Heart right ventricle (tissue), 16 donors: ENCODE measurements at regions of chr3 and their contacts with region 1.

Region 1: GRCh38 chr3:107740992-107741896 is 218.5 kb downstream of the BBX start:
- DNase-seq: no peak
- ATAC-seq: no peak
- H3K4me3 ChIP-seq: no peak overlapping the region
- H3K27ac ChIP-seq: no peak overlapping the region
- H3K4me1 ChIP-seq: peaks cover 0 to 4% (median 0%) of the 10 kb centered on the region in 9 donors
- H3K27me3 ChIP-seq: no peaks in the 10 kb centered on the region
- CTCF ChIP-seq: peak; percentile 39 to 78 (median 62)

Region 2: DNA sequence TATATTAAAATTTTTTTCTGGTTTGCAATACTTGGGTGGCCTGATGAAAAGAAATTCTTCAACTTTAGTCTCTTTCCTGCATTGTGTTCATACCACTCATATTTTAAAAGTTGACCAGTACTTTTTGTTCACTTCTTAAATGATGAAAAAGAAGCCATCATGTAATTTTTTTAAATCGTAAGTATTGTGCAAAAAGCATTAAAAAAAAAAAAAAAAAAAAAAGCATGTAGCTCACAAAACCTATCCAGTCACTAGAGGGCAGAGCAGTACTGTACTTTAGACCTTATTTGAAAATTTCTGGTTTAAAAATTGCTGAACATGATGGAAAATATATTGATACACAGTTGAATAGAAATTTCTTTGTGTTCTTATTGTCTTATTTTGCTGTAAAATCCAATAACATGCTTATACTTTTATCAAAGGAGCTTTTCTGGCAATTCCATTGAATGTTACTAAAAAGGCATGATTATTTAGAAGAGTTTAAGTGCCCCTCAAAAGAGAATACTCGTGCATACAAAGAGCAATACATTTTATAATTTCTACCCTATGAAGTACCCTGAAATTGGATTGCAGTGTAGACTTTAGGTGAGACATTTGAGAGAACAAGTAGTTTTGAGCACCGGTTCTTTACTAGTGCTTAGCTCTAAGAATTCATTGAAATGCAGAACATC is 80.8 kb before region 1 on chr3:
- intact Hi-C with region 1: loop called in 1 of 10 experiments (anchors 5 kb)
- DNase-seq: no peak
- ATAC-seq: no peak
- H3K4me3 ChIP-seq: no peak overlapping the region
- H3K27ac ChIP-seq: no peak overlapping the region
- H3K4me1 ChIP-seq: peaks cover 0 to 37% (median 25%) of the 10 kb centered on the region in 9 donors
- H3K27me3 ChIP-seq: no peaks in the 10 kb centered on the region
- CTCF ChIP-seq: peak; percentile 9 to 73 (median 62)

Region 3: DNA sequence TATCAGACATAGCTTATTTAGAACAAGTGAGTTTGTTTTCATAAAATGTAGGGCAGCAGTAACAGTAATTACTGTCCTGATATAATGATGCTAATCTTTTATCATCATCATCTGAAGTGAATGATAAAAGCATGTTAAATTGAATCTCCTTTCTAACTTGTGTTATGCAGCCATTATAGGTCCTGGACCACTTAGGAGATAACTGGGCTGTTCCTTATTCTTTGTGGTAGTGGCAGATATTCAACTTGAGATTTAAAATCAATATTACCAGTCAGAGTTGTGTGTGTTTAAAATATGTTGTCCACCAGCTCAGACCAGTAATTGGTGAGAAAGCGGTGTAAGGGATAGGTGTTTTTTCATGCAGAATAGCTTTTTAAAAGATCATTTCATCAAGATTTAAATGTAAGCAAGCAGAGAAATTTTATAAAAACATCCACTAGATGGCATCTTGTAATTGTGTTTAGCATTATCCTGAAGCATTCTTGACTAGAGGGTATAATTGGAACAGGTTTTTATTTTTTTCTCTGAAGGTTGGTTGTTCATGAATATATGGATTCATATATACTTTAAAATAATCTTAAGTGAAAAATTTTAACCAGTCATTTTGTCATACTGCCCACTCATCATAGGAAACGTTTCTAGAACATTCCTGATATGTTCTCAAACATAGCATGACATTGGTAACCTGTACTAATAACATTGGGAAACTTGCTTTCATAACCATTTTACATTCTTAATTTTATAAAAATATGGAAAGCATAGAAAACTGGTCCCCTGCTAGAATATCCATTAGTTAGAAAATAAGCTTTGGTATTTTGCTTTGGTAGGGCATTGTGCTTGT is 64.6 kb before region 1 on chr3:
- intact Hi-C with region 1: loop called (anchors 5 to 10 kb)
- DNase-seq: no peak
- ATAC-seq: peak in 3 of 8 donors; percentile 48 to 64 (median 53)
- H3K4me3 ChIP-seq: no peak overlapping the region
- H3K27ac ChIP-seq: no peak overlapping the region
- H3K4me1 ChIP-seq: peaks cover 0 to 39% (median 16%) of the 10 kb centered on the region in 9 donors
- H3K27me3 ChIP-seq: no peaks in the 10 kb centered on the region
- CTCF ChIP-seq: peak; percentile 22 to 74 (median 61)

Region 4: GRCh38 chr3:107690522-107691138 is 50.6 kb before region 1 on chr3:
- intact Hi-C with region 1: loop called in 2 of 10 experiments (anchors 5 to 10 kb)
- DNase-seq: no peak
- ATAC-seq: peak in 2 of 8 donors; percentile 55 to 65
- H3K4me3 ChIP-seq: no peak overlapping the region
- H3K27ac ChIP-seq: no peak overlapping the region
- H3K4me1 ChIP-seq: peaks cover 0 to 8% (median 0%) of the 10 kb centered on the region in 9 donors
- H3K27me3 ChIP-seq: no peaks in the 10 kb centered on the region
- CTCF ChIP-seq: peak; percentile 19 to 67 (median 53)

Region 5: GRCh38 chr3:107794664-107795443 is 53.6 kb after region 1 on chr3:
- intact Hi-C with region 1: no loop called
- DNase-seq: no peak
- ATAC-seq: peak; percentile 39 to 88 (median 68)
- H3K4me3 ChIP-seq: no peak overlapping the region
- H3K27ac ChIP-seq: peak overlapping the region in 6 of 10 donors; percentile 6 to 55 (median 14)
- H3K4me1 ChIP-seq: peaks cover 0 to 20% (median 5%) of the 10 kb centered on the region in 9 donors
- H3K27me3 ChIP-seq: no peaks in the 10 kb centered on the region
- CTCF ChIP-seq: peak in 7 of 9 donors; percentile 18 to 49 (median 27)

Region 6: DNA sequence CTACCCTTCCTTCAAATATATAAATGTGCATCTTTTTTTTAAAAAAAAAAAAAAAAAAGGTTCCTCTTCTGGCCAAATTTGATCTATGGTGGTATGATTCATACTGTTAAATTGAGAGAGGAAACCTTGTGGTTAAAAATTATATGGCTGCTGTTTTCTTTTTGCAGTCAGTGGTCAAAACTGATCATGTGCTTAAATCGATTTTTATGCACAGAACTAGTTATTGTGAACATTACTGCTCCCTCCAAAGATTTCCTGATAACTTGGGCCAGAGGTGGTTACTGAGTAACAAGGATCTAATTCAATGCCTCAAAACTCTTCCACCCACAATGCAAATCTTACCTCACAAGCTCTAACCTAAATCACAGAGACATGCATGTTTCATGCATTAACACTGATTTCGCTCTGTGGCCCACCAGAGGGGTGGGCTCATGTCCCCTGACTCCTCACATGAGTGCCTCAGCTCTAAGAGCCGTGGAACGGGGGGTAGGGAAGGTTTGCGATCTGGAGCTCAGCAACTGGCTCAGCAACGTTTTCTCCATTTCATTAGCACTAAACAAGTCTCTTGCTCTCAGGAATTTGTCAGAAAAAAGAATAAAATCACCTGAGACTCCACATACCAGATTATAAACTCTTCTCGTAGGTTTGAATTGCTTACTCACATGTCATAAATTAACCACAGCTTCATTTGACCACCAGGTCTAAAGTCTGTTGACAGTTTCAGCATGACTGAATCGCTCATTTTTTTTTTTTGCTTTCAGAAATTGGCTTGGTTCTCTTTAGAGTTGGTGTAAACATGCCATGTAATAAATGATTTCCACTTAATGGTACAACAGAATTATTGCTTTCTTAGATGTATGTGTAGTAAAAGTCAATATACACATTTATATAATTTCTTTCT is 69.2 kb after region 1 on chr3:
- intact Hi-C with region 1: no loop called
- DNase-seq: no peak
- ATAC-seq: no peak
- H3K4me3 ChIP-seq: no peak overlapping the region
- H3K27ac ChIP-seq: no peak overlapping the region
- H3K4me1 ChIP-seq: peaks cover 0 to 5% (median 0%) of the 10 kb centered on the region in 9 donors
- H3K27me3 ChIP-seq: no peaks in the 10 kb centered on the region
- CTCF ChIP-seq: no peak

Region 7: GRCh38 chr3:107927361-107928083 is 186.3 kb after region 1 on chr3:
- intact Hi-C with region 1: no loop called
- DNase-seq: peak; percentile 43 to 73
- ATAC-seq: peak; percentile 95 to 99 (median 97)
- H3K4me3 ChIP-seq: peak overlapping the region; percentile 23 to 72 (median 58)
- H3K27ac ChIP-seq: peak overlapping the region in 1 of 10 donors; percentile 5
- H3K4me1 ChIP-seq: peaks cover 0 to 18% (median 8%) of the 10 kb centered on the region in 9 donors
- H3K27me3 ChIP-seq: peaks cover 0 to 21% (median 0%) of the 10 kb centered on the region in 7 donors
- CTCF ChIP-seq: peak; percentile 86 to 98 (median 93)